ENCODE measurements at regions of chr22 and their contacts with region 1.

Region 1: DNA sequence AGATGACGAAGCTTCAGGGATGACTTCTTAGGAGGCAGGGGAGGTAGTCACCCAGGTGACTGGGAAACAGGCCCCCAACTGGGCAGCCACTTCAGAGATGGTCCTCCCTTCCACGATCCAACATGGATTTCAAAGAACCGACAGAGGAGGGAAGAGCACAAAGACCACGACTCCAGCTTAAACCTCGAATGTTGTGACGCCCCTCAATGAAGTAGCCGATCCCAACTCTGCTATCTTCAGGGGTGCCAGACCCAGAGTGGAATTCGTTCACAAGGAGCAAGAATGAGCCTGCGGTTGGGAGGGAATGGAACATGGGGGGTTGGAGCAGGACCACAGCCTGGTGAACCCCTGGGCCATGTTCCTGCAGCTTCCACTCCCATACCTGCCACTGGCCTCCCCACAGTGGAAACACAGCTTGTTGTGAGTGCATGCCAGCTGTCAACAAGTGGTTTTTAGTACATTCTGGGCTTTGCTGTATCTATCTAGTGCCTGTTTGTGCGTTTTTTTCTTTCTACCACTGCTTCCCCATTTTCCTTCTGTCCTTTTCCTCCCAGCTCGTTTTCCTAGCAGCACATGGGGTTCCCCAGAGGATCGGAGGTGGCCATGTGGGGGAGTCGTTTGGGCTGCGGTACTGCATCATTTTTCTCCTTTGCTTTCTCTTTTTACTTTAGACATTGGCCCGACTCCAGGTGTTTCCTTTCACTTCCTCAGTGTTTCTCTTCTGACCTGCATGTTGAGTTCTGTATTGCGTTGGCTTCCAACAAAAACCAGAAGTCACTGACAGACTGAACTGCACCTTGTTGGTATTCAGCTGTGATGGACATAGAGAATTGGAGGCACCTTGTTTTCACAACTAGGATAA is 65.8 kb downstream of the MORC2 start:
- DNase-seq: peak; percentile 40
- ATAC-seq: peak; percentile 71
- H3K4me3 ChIP-seq: no peak overlapping the region; the same call in 1 of the 2 replicates
- H3K27ac ChIP-seq: 0 out of 2 replicates have a peak overlapping the region, but pooled peaks have one; percentile 20
- H3K4me1 ChIP-seq: peaks cover 9% of the 10 kb centered on the region
- H3K27me3 ChIP-seq: no peaks in the 10 kb centered on the region
- CTCF ChIP-seq: no peak
- EP300 ChIP-seq: no peak
- POLR2A ChIP-seq: no peak
- RAD21 ChIP-seq: no peak

Region 2: GRCh38 chr22:30890686-30891442 is 11.9 kb before region 1 on chr22:
- CTCF ChIA-PET with region 1: interaction called, 11 read pairs
- POLR2A ChIA-PET with region 1: no interaction called
- RAD21 ChIA-PET with region 1: no interaction called
- SMC1A ChIA-PET with region 1: no interaction called
- in situ Hi-C with region 1: no loop called
- intact Hi-C with region 1: no loop called
- DNase-seq: no peak
- ATAC-seq: peak; percentile 84
- H3K4me3 ChIP-seq: no peak overlapping the region
- H3K27ac ChIP-seq: no peak overlapping the region
- H3K4me1 ChIP-seq: no peaks in the 10 kb centered on the region
- H3K27me3 ChIP-seq: no peaks in the 10 kb centered on the region
- CTCF ChIP-seq: peak; percentile 48 to 75 (median 75)
- EP300 ChIP-seq: no peak
- POLR2A ChIP-seq: no peak
- RAD21 ChIP-seq: peak; percentile 40; the same call in 1 of the 2 replicates